Adrenal gland (tissue), 19 donors: ENCODE measurements at regions of chr16 and their contacts with region 1.

Region 1: DNA sequence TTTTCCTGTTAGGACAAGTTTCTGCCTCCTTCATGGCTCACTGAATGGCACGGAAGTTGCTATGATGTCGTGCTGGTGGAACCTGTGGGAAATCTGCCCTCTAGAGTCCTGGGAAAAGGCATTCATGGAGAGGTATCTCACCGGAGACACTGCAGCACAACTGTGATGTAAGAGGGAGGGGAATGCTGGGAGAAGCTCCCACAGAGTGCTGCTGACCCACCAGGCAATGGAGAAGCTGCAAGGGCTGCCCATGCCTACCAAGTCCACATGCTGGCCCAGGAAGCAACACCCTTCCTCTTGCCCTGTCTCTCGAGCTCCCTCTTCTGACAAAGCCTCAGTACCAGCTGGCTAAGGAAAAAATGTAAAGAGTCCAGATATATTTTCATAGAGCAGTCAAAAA is 45.2 kb upstream of the SLC5A11 start:
- DNase-seq: no peak
- H3K4me3 ChIP-seq: no peak overlapping the region
- H3K27ac ChIP-seq: no peak overlapping the region
- H3K4me1 ChIP-seq: no peaks in the 10 kb centered on the region
- H3K27me3 ChIP-seq: no peaks in the 10 kb centered on the region
- CTCF ChIP-seq: no peak
- POLR2A ChIP-seq: no peak

Region 2: DNA sequence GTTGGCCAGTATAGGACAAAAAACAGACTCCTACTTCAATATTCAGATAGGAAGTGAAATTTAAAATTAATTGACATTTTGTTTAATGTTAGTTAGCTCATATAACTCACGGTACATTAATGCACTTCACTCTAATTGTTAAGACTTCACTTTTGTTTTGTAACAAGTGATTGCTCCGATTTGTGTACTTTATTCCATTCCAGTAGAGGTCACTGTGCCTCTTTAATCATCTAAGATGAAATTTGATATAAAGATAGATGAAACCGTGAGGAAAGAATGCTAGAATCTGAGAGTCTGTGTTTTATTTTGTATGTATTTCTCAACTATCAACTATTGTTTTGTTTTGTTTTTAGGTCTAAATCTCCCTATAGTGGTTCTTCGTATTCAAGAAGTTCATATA is 232.2 kb before region 1 on chr16:
- intact Hi-C with region 1: loop called in 1 of 2 experiments (anchors 10 kb)
- DNase-seq: no peak
- H3K4me3 ChIP-seq: no peak overlapping the region
- H3K27ac ChIP-seq: no peak overlapping the region
- H3K4me1 ChIP-seq: no peaks in the 10 kb centered on the region
- H3K27me3 ChIP-seq: no peaks in the 10 kb centered on the region
- CTCF ChIP-seq: peak in 4 of 6 experiments; percentile 9 to 38 (median 34)
- POLR2A ChIP-seq: no peak

Region 3: GRCh38 chr16:24748242-24748641 is 52.3 kb before region 1 on chr16:
- intact Hi-C with region 1: no loop called
- DNase-seq: peak; percentile 56 to 81 (median 74)
- H3K4me3 ChIP-seq: no peak overlapping the region
- H3K27ac ChIP-seq: peak overlapping the region in 3 of 5 donors; percentile 27 to 64 (median 52)
- H3K4me1 ChIP-seq: peaks cover 52 to 97% of the 10 kb centered on the region in 2 donors
- H3K27me3 ChIP-seq: no peaks in the 10 kb centered on the region
- CTCF ChIP-seq: no peak
- POLR2A ChIP-seq: peak in 1 of 2 donors; percentile 41